BJ (cell line): ENCODE measurements at regions of chr7 and their contacts with region 1.

Region 1: DNA sequence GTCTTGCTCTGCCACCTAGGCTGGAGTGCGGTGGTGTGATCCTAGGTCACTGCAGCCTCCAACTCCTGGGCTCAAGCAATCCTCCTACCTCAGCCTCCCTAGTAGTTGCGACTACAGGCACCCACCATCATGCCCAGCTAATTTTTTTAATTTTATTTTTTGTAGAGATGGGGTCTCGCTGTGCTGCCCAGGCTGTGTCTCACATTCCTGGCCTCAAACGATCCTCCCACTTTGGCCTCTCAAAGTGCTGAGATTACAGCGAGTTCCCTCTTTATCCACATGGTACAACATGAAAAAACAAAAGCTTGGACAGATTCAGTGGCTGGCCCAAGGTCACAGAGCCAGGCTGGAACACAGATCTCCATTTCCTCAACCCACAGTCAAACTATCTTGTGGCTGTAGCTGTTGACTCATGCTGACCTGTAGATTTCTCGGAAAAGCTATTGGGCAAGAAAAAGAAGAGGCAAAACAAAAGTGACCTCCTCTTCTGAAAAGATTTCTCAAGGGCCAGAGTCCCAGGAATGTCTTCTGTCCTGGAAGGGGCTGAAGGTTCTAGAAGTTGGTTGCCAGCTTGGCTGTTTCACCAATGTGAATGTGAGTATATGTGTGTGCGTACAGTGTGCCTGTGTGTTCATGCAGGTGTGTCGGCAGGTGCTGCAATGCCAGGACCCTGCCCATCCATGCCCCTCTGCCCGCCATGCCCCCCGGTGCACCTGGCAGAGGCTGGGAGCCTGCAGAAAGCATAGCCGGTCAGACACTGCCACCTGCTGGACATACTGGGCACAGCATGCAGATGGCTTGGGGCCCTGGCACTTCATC is 28.4 kb downstream of the TMEM130 start:
- DNase-seq: no peak
- H3K4me3 ChIP-seq: no peak overlapping the region
- H3K27me3 ChIP-seq: peaks cover 7% of the 10 kb centered on the region
- CTCF ChIP-seq: peak; percentile 96

Region 2: DNA sequence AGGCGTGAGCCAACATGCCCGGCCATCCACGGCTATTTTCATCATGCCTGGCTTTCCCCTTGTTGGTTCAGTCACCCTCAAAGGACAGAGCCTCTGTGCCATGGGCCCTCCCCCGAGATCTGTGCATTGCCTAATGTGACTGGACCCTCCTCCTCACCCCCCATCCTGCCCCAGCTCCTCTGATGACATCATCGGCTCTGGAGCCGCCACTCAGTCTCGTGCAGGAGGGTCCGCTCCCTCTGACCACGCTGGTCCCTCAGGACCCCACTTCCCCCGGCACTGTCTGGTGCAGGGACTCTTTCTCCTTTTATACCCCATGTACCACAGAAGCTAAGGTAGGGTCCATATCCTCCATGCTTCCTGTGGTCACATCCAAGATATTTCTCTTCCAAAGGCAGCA is 407.3 kb before region 1 on chr7:
- CTCF ChIA-PET with region 1: interaction called, 149 read pairs
- POLR2A ChIA-PET with region 1: no interaction called
- DNase-seq: no peak
- H3K4me3 ChIP-seq: no peak overlapping the region
- H3K27me3 ChIP-seq: no peaks in the 10 kb centered on the region
- CTCF ChIP-seq: no peak

Region 3: GRCh38 chr7:98733036-98733435 is 108.4 kb before region 1 on chr7:
- CTCF ChIA-PET with region 1: no interaction called
- POLR2A ChIA-PET with region 1: no interaction called
- DNase-seq: no peak
- H3K4me3 ChIP-seq: no peak overlapping the region
- H3K27me3 ChIP-seq: no peaks in the 10 kb centered on the region; the same call in 1 of the 2 replicates
- CTCF ChIP-seq: peak; percentile 46

Region 4: GRCh38 chr7:98826387-98827231 is 14.8 kb before region 1 on chr7:
- CTCF ChIA-PET with region 1: interaction called, 69 read pairs
- POLR2A ChIA-PET with region 1: no interaction called
- DNase-seq: no peak
- H3K4me3 ChIP-seq: no peak overlapping the region
- H3K27me3 ChIP-seq: peaks cover 4% of the 10 kb centered on the region
- CTCF ChIP-seq: 0 out of 2 replicates have a peak, but pooled peaks have one; percentile 18

Region 5: GRCh38 chr7:98862716-98863420 is 21.5 kb after region 1 on chr7:
- CTCF ChIA-PET with region 1: interaction called, 11 read pairs
- POLR2A ChIA-PET with region 1: no interaction called
- DNase-seq: no peak
- H3K4me3 ChIP-seq: no peak overlapping the region
- H3K27me3 ChIP-seq: no peaks in the 10 kb centered on the region
- CTCF ChIP-seq: no peak

Region 6: DNA sequence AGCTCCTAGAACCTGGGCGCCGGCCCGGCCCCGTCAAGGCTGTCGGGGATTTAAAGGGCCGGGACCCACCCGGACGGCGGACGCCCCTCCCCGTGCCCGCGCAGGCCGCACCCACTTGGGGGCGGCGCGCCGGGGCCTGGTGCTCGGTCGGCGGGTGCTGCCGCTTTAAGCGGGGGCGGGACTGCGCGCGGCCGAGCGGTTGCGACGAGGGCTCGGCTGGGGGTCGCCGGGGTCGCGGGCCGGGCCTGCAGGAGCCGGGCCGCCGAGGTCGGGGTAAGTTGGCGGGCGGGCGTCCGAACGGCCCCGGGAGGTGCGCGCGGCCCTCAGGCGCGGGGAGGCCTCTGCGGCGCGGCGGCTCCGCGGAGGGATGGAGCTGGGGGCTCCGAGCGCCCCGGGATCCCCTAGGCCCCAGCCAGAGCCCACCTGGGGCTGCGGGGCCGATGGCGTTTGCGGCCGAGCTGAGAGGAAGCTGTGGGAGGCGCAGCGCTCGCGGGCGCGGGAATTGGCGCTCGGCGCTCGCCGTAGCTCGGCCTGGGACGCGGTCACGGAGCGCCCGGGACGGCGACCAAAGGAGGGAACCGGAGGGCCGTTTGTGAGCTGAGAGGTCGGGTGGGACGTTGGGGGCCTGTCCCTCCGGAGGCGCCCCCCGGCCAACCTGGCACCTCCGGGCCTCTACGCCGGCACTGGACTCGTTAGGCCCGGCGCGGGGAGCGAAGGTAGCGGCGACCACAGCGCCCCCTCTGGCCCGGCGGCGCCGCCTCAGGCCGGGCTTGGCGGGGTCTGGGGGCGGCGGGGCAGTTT is 37.2 kb after region 1 on chr7 and contains the start of gene TRRAP:
- CTCF ChIA-PET with region 1: interaction called, 23 read pairs
- POLR2A ChIA-PET with region 1: no interaction called
- DNase-seq: no peak
- H3K4me3 ChIP-seq: peak within 1 kb of the TSS; percentile 87
- H3K27me3 ChIP-seq: no peaks in the 10 kb centered on the region
- CTCF ChIP-seq: peak; percentile 67
- polyA plus RNA-seq, gene TRRAP: 11.8 and 17.2 TPM in 2 replicates